CD8-positive, alpha-beta T cell (primary cell): ENCODE measurements at regions of chr2 and their contacts with region 1.

Region 1: GRCh38 chr2:174985630-174986029 is 19.6 kb downstream of the CHN1 start:
- DNase-seq: no peak
- ATAC-seq: no peak
- H3K4me3 ChIP-seq: no peak overlapping the region
- H3K4me3 Mint-ChIP-seq: no peak overlapping the region
- H3K27ac ChIP-seq: no peak overlapping the region
- H3K27ac Mint-ChIP-seq: no peak overlapping the region
- H3K4me1 ChIP-seq: no peaks in the 10 kb centered on the region
- H3K4me1 Mint-ChIP-seq: peaks cover 6% of the 10 kb centered on the region
- H3K27me3 ChIP-seq: no peaks in the 10 kb centered on the region
- H3K27me3 Mint-ChIP-seq: peaks cover 4% of the 10 kb centered on the region
- CTCF ChIP-seq: no peak

Region 2: DNA sequence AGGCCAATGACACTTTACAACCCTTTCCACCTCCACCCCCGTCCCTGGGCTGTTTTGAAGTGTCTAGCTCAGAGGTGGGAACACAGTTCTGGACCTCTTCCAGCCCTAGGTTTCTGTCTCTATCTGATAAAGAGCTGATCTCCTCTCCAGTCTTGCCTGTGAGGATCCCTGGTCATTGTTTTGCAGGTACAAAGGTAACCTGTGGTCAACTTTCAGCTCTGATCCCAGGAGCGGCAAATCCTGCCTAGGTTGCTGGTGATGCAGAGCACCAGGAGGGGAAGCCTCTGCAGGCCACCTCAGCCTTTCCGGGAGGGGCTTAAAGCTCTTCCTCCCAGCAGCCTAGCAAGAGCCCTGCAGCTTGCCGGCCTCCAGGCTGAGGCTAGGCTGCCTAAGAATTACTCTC is 318.2 kb before region 1 on chr2:
- CTCF ChIA-PET with region 1: no interaction called
- POLR2A ChIA-PET with region 1: no interaction called
- intact Hi-C with region 1: no loop called
- DNase-seq: no peak
- ATAC-seq: no peak
- H3K4me3 ChIP-seq: no peak overlapping the region
- H3K4me3 Mint-ChIP-seq: no peak overlapping the region
- H3K27ac ChIP-seq: no peak overlapping the region
- H3K27ac Mint-ChIP-seq: no peak overlapping the region
- H3K4me1 ChIP-seq: peaks cover 15% of the 10 kb centered on the region
- H3K4me1 Mint-ChIP-seq: peaks cover 26% of the 10 kb centered on the region
- H3K27me3 ChIP-seq: no peaks in the 10 kb centered on the region
- H3K27me3 Mint-ChIP-seq: no peaks in the 10 kb centered on the region
- CTCF ChIP-seq: no peak

Region 3: GRCh38 chr2:174704642-174705041 is 281.0 kb before region 1 on chr2:
- CTCF ChIA-PET with region 1: interaction called, 68 read pairs
- POLR2A ChIA-PET with region 1: interaction called, 6 read pairs
- intact Hi-C with region 1: loop called (anchors 1 kb)
- DNase-seq: no peak
- ATAC-seq: no peak
- H3K4me3 ChIP-seq: no peak overlapping the region
- H3K4me3 Mint-ChIP-seq: no peak overlapping the region
- H3K27ac ChIP-seq: no peak overlapping the region
- H3K27ac Mint-ChIP-seq: no peak overlapping the region
- H3K4me1 ChIP-seq: no peaks in the 10 kb centered on the region
- H3K4me1 Mint-ChIP-seq: peaks cover 4% of the 10 kb centered on the region
- H3K27me3 ChIP-seq: no peaks in the 10 kb centered on the region
- H3K27me3 Mint-ChIP-seq: peaks cover 10% of the 10 kb centered on the region
- CTCF ChIP-seq: no peak